ENCODE measurements at regions of chr1 and their contacts with region 1.

Region 1: GRCh38 chr1:2133039-2133878 is 61.3 kb downstream of the FAAP20 start:
- DNase-seq: peak; percentile 84
- H3K4me3 ChIP-seq: peak overlapping the region; percentile 38
- CTCF ChIP-seq: no peak

Region 2: GRCh38 chr1:2073382-2074230 is 59.7 kb before region 1 on chr1:
- in situ Hi-C with region 1: no loop called
- DNase-seq: peak; percentile 20
- H3K4me3 ChIP-seq: peak overlapping the region; percentile 45
- CTCF ChIP-seq: no peak

Region 3: GRCh38 chr1:2174348-2175054 is 41.2 kb after region 1 on chr1:
- in situ Hi-C with region 1: loop called (anchors 5 kb)
- DNase-seq: peak; percentile 26
- H3K4me3 ChIP-seq: peak overlapping the region; percentile 25
- CTCF ChIP-seq: peak; percentile 98

Measured in astrocyte of the cerebellum (primary cell).